ENCODE measurements at regions of chr3 and their contacts with region 1.

Region 1: GRCh38 chr3:29285471-29286071 is 4.7 kb downstream of the RBMS3 start:
- DNase-seq: no peak
- ATAC-seq: no peak
- H3K4me3 ChIP-seq: peak overlapping the region in 11 of 12 donors; percentile 2 to 67 (median 43)
- H3K27ac ChIP-seq: peak overlapping the region; percentile 20 to 92 (median 60)
- H3K4me1 ChIP-seq: peaks cover 0 to 43% (median 16%) of the 10 kb centered on the region in 12 donors
- H3K27me3 ChIP-seq: no peaks in the 10 kb centered on the region
- CTCF ChIP-seq: no peak
- POLR2A ChIP-seq: no peak

Region 2: GRCh38 chr3:28718074-28718849 is 567.3 kb before region 1 on chr3:
- intact Hi-C with region 1: no loop called
- DNase-seq: no peak
- ATAC-seq: no peak
- H3K4me3 ChIP-seq: no peak overlapping the region
- H3K27ac ChIP-seq: no peak overlapping the region
- H3K4me1 ChIP-seq: no peaks in the 10 kb centered on the region
- H3K27me3 ChIP-seq: no peaks in the 10 kb centered on the region
- CTCF ChIP-seq: no peak
- POLR2A ChIP-seq: no peak

Region 3: GRCh38 chr3:29324180-29324651 is 38.6 kb after region 1 on chr3:
- intact Hi-C with region 1: loop called in 3 of 10 experiments (anchors 5 kb)
- DNase-seq: peak in 4 of 5 donors; percentile 55 to 75 (median 58)
- ATAC-seq: peak; percentile 78 to 92 (median 86)
- H3K4me3 ChIP-seq: peak overlapping the region in 9 of 12 donors; percentile 8 to 49 (median 37)
- H3K27ac ChIP-seq: peak overlapping the region in 11 of 12 donors; percentile 50 to 90 (median 73)
- H3K4me1 ChIP-seq: peaks cover 0 to 59% (median 27%) of the 10 kb centered on the region in 12 donors
- H3K27me3 ChIP-seq: no peaks in the 10 kb centered on the region
- CTCF ChIP-seq: no peak
- POLR2A ChIP-seq: no peak

Region 4: GRCh38 chr3:31043184-31043820 is 1757.7 kb after region 1 on chr3:
- intact Hi-C with region 1: no loop called
- DNase-seq: no peak
- ATAC-seq: peak in 1 of 4 donors; percentile 55
- H3K4me3 ChIP-seq: no peak overlapping the region
- H3K27ac ChIP-seq: peak overlapping the region in 1 of 12 donors; percentile 11
- H3K4me1 ChIP-seq: peaks cover 0 to 5% (median 0%) of the 10 kb centered on the region in 12 donors
- H3K27me3 ChIP-seq: no peaks in the 10 kb centered on the region
- CTCF ChIP-seq: no peak
- POLR2A ChIP-seq: no peak

Measured in heart left ventricle (tissue), 16 donors.